ENCODE measurements at regions of chr3 and their contacts with region 1.

Region 1: DNA sequence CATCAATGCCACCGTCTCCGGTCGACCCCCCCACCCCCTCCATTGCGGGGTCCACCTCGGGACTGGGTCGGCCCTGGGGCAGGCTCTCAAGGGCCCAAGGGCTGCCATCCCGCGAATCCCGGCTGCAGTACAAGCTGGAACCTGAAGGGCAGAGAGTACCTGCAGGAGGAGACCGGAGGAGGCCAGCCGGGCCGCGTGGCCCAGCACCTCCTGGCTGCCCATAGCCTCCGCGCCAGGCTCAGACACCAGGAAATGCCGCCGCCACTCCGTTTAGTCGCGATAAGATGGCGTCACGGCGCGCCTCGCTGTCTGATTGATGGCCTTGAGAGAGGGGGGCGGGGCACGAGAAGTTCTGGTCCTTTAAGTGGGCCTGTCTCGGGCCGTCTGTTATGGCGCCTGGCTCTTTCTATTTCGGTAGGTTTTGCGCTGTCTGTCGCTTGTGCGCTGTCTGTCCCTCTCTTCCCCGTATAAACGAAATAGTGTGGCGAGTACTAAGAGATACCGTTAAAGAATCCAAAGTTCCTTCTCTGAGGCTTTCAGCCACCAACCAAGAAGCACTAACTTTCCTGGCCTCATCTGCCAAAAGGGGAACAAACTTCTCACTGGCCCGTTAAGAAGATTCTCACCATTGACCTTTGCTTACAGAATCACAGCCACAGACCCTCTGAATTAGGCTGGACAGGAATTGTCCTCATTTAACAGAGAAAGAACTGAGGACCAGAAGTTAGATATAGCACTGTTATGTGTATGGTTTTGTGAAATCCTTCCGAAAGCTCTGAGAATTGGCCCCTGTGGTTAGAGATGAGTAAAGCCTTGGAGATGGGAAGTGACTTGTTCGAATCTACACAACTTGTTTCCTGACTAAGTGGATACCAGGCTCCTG is at the start of gene RFT1:
- DNase-seq: peak; percentile 90
- H3K4me3 ChIP-seq: peak within 1 kb of the TSS; percentile 86
- H3K27ac ChIP-seq: peak within 1 kb of the TSS; percentile 79 to 82
- H3K4me1 ChIP-seq: peaks cover 0 to 12% of the 10 kb centered on the region in 2 experiments; a peak in 2 of 4 replicates
- H3K27me3 ChIP-seq: no peaks in the 10 kb centered on the region
- CTCF ChIP-seq: no peak
- EP300 ChIP-seq: no peak
- RAD21 ChIP-seq: no peak
- polyA plus RNA-seq, gene RFT1: 13.8 and 22.9 TPM in 2 replicates

Region 2: GRCh38 chr3:52752045-52752660 is 378.3 kb before region 1 on chr3:
- CTCF ChIA-PET with region 1: no interaction called
- POLR2A ChIA-PET with region 1: no interaction called
- DNase-seq: no peak
- H3K4me3 ChIP-seq: no peak overlapping the region
- H3K27ac ChIP-seq: no peak overlapping the region
- H3K4me1 ChIP-seq: no peaks in the 10 kb centered on the region
- H3K27me3 ChIP-seq: no peaks in the 10 kb centered on the region
- CTCF ChIP-seq: no peak
- EP300 ChIP-seq: no peak
- RAD21 ChIP-seq: no peak

Region 3: GRCh38 chr3:53114011-53114400 is 16.4 kb before region 1 on chr3:
- CTCF ChIA-PET with region 1: interaction called, 36 read pairs
- POLR2A ChIA-PET with region 1: no interaction called
- DNase-seq: peak; percentile 78
- H3K4me3 ChIP-seq: no peak overlapping the region
- H3K27ac ChIP-seq: peak overlapping the region; percentile 33 to 61
- H3K4me1 ChIP-seq: peaks cover 0 to 13% of the 10 kb centered on the region in 2 experiments; a peak in 1 of 4 replicates
- H3K27me3 ChIP-seq: no peaks in the 10 kb centered on the region
- CTCF ChIP-seq: peak; percentile 92
- EP300 ChIP-seq: no peak
- RAD21 ChIP-seq: peak; percentile 89

Region 4: DNA sequence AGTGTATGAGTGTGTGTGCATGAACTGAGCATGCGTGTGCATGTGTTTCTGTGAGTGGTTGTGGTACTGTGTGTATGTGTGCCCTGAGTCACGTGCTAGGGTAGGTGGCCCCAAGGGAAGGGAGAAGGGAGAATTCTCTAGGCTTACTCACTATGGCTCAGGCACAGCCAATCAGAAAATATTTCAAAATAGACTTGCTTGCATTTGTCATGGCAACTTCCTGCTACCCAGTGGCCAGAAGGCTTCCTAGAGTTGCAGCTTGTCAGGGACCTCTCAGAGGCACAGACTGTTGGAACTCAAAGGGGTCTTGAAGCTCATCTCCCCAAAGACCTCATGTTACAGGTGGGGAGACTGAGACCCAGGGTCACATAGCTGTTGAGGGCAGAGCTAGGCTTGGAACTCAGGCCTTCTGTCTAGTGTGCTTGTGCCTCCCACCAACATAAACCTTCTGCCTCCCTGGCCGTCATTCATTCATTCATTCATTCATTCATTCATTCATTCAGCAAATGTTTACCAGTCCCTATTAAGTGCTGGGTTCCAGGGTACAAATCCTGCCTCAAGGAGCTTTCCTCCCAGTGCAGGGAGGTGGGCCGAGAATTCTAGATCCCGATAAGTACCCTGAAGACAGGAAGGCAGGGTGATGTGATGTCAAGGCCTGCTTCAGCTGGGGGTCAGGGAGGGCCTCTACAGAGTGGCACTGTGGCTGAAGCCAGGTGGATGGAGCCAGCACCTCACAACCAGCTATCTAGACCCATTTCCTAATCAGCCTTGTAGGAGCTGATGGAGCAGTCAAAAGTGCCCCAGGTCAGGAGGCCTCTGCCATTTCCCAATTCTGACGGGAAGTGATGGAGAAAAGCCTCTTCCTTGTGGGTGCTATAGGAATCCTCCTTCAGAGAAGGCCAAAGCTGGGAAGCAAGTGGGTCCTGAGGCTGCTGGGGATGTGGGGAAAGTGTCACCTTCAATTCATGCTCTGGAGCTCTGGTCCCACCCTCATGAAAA is 10.7 kb after region 1 on chr3:
- CTCF ChIA-PET with region 1: interaction called, 30 read pairs
- POLR2A ChIA-PET with region 1: no interaction called
- DNase-seq: no peak
- H3K4me3 ChIP-seq: no peak overlapping the region
- H3K27ac ChIP-seq: no peak overlapping the region
- H3K4me1 ChIP-seq: no peaks in the 10 kb centered on the region; a peak in 1 of 4 replicates
- H3K27me3 ChIP-seq: no peaks in the 10 kb centered on the region
- CTCF ChIP-seq: no peak
- EP300 ChIP-seq: no peak
- RAD21 ChIP-seq: no peak

Region 5: DNA sequence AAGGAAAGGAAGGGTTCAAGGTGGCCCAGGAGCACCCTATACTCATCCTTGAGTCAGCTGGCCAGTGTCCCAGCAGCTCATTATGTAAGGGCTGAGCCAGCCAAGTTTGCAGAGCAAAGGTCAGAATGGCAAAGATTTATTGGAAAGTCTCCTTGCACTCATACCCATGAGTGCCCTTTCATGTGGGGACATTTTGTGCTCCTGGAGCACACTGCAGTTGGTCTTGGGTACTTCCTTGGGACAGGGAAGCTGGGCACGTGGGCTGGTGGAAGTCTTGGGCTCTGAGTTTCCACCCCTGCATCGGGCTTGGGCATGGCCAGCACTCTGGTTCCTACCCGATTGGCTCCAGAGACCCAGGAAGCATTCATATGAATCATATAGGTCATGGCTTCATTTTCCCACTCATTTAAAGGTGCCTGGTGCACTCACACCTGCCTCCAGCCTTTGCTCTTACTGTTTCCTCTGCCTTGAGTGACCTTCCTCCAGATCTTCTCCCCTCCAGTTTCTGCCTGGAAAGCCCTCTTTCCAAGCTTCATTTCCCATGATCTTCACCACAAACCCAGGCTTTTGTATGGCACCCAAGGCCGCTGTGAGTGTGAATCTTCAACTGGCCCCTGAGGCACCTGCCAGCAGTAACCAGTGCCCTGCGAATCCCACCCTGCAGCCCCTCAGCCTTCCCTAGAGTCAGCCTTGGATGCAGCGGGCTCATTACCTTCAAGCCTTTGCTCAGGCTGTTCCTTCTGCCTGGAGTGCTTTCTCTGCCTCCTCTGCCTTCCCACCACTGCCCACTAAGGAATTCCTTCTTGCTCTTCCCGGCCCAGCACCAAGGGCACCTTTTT is 20.0 kb after region 1 on chr3:
- CTCF ChIA-PET with region 1: interaction called, 30 read pairs
- POLR2A ChIA-PET with region 1: no interaction called
- DNase-seq: no peak
- H3K4me3 ChIP-seq: no peak overlapping the region
- H3K27ac ChIP-seq: no peak overlapping the region
- H3K4me1 ChIP-seq: peaks cover 0 to 5% of the 10 kb centered on the region in 2 experiments; a peak in 2 of 4 replicates
- H3K27me3 ChIP-seq: no peaks in the 10 kb centered on the region
- CTCF ChIP-seq: no peak
- EP300 ChIP-seq: no peak
- RAD21 ChIP-seq: no peak

Measured in SK-N-SH (cell line).